Dendritic cell treated with granulocyte-macrophage colony-stimulating factor and Interleukin-4, amounts not matched to agents 40 ng/mL and 50 ng/mL, for 4 days (primary cell): ENCODE measurements at regions of chr1 and their contacts with region 1.

Region 1: GRCh38 chr1:165597883-165598675 is 33.0 kb upstream of the MGST3 start:
- H3K4me3 Mint-ChIP-seq: peak overlapping the region; percentile 82
- H3K27ac Mint-ChIP-seq: peak overlapping the region; percentile 76
- H3K4me1 Mint-ChIP-seq: peaks cover 47% of the 10 kb centered on the region
- H3K27me3 Mint-ChIP-seq: peaks cover 47% of the 10 kb centered on the region

Region 2: DNA sequence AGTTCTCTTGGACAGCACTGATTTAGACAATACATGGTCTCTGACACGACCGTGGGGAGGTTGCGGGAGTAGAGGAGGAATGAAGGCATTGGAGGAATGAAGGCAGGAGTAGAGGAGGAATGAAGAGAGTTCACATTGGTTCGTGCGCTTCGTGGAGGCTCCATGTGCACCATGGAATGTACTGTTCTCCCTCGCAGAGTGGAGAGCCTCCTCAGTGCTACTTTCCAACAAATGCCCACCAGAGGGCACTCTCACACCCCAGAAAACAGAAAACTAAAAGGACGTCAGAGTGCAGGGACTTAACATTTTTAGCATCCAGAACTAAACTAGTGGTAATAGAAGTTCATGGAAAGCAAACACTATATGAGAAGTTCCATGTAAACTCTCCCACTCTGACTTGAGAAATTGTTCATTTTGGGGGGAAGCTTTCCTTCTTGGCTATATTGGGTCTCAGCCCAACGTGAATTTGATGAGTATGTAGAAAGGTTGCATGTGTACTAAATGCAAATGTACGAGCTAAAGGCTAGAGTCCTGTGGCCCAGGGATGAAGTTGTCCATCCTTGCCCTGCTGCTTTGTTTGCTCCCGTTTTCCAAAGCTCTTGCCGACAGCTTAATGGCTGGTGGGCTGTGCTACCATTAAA is 453.2 kb before region 1 on chr1:
- intact Hi-C with region 1: loop called (anchors 5 kb)
- H3K4me3 Mint-ChIP-seq: no peak overlapping the region
- H3K27ac Mint-ChIP-seq: no peak overlapping the region
- H3K4me1 Mint-ChIP-seq: no peaks in the 10 kb centered on the region
- H3K27me3 Mint-ChIP-seq: no peaks in the 10 kb centered on the region

Region 3: DNA sequence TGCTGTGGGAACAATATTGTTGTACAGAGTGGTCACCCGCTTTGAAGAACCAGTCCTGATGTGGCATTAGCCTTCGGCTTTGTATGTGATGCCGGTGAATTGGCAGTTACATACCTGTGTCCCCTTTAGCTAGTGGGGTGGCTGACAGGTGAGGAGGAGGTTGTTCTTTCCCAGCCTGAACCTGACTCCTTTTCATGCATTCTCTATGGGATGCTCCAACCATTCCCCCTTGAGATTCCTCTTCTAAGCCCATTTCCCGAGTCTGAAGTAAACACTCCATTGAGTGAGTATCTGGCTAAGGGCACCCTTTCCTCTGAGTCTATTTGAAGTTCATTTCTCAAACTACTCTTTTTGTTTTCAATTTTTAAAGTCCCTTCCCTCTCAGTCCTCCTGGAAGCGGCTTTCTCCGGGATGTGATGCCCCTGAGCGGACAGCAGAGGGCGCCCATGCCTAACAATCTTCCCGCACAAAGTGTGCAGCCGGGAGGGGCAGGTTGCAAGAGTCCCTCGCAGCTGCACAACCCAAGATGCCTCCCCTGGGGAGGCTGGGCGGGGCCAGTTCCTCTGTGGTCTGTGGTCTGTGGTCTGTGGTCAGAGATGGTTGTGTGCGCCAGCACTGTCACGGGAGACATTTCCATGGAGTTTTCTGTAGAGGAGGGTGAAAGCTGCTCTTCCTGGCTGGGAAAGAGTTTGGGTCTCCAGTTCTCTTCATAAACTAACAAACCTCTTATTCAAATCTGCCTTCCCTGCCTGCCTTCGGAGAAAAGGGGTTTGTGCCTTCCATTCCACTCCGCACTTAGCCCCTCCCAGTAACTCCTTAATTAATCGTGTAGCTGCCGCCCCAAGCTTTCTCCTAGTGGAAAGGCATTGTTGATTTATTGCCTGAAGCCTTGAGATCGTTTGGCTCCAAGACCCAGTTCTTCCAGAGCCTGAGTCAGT is 205.2 kb before region 1 on chr1:
- intact Hi-C with region 1: loop called (anchors 1 kb)
- H3K4me3 Mint-ChIP-seq: peak overlapping the region; percentile 48
- H3K27ac Mint-ChIP-seq: peak overlapping the region; percentile 45
- H3K4me1 Mint-ChIP-seq: peaks cover 27% of the 10 kb centered on the region
- H3K27me3 Mint-ChIP-seq: peaks cover 93% of the 10 kb centered on the region

Region 4: DNA sequence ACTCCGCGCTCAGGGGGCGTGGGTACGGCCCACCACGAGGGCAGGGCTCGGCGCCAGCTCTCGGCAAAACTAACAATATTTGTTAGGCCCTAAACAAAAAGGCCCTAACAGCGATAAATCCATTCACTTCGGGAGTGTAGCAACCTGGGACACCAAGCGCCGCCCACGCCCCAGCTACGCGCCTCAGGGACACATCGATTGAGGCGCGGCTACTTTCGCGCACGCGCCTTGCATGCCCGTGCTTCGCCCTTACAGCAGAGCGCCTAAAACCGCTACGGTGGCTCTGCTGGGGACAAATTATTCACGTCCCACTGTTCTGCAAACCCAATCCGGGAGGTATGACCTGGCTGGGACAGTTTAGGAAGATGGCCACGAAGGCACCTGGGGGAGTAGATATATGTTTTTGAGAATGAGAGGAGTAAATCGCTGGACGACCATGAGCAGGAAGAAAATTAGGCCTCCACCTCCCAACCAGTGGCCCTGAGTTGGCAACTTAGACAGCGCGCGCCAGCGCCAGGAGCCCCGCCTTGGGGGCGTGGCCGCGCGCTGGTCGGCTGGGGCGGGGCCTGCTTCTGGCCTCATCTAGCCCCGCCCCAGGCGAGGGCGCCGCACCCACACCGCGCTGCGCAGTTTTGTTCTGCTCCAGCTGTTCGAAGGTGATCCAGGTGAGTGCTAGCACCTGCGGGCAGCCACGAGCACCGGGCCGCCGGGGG is 32.7 kb after region 1 on chr1 and contains the start of gene MGST3:
- intact Hi-C with region 1: loop called (anchors 2 kb)
- H3K4me3 Mint-ChIP-seq: no peak within 1 kb of the TSS
- H3K27ac Mint-ChIP-seq: no peak within 1 kb of the TSS
- H3K4me1 Mint-ChIP-seq: peaks cover 22% of the 10 kb centered on the region
- H3K27me3 Mint-ChIP-seq: no peaks in the 10 kb centered on the region

Region 5: DNA sequence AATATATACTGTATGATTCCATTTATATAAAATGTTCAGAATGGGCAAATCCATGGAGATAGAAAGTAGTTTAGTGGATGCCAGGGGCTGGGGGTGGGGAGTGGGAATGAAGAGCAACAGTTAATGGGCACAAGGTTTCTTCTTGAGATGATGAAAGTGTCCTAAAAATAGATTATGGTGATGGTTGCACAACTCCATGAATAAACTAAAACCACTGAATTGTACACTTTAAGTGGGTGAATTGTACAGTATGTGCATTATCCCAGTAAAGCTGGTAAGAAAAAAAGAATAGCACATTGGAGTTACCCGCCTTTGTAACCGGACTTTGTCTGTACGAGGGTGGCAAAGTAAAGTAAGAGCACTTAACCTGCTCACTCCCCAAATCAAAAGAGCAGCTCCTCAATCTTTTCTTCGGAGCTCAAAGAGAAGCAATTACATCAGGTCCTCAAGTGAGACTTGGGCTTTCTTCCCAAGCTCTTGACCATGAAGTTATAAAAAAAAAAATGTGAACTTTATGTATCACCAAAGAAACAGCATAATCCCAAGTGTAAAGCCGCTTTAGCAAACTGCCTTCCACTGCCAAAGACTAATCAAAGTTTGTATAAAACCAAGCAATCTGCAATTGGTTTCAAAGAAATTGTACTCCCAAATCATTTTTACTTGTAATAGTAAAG is 68.2 kb after region 1 on chr1:
- intact Hi-C with region 1: loop called (anchors 10 kb)
- H3K4me3 Mint-ChIP-seq: no peak overlapping the region
- H3K27ac Mint-ChIP-seq: no peak overlapping the region
- H3K4me1 Mint-ChIP-seq: peaks cover 34% of the 10 kb centered on the region
- H3K27me3 Mint-ChIP-seq: no peaks in the 10 kb centered on the region

Region 6: DNA sequence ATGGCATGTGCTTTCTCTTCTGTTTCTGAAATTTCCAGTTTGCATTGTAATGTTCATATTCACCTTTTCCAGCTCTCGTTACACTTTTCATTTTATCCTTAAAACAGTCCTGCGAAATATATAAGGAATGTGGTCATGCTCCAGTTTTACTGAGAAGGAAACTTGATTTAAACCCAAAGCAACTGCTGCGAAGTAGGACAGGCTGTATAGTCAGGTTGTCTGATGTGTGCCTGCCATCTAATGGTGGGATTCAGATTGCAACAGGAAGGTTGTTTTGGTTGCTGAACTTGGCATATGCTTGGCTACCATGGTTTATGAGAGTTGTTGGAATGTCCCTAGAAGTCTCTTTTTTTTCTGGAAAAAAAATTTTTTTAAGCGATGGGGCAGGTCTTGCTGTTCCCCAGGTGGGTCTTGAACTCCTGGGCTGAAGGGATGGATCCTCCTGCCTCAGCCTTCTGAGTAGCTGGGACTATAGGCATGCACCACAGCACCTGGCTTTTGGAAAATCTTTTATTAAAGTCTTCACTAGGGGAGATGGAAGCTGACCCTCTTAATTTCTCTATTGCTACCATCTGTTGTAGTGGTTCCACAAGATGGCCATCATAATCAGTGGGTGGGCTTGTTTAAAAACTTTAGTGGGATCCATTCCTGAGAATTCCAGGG is 316.2 kb after region 1 on chr1:
- intact Hi-C with region 1: loop called (anchors 1 kb)
- H3K4me3 Mint-ChIP-seq: no peak overlapping the region
- H3K27ac Mint-ChIP-seq: no peak overlapping the region
- H3K4me1 Mint-ChIP-seq: peaks cover 5% of the 10 kb centered on the region
- H3K27me3 Mint-ChIP-seq: no peaks in the 10 kb centered on the region